ENCODE measurements at regions of chr14 and their contacts with region 1.

Region 1: GRCh38 chr14:41993687-41994086 is 387.0 kb downstream of the LRFN5 start:
- DNase-seq: no peak
- H3K4me3 ChIP-seq: no peak overlapping the region
- CTCF ChIP-seq: no peak
- POLR2A ChIP-seq: no peak

Region 2: DNA sequence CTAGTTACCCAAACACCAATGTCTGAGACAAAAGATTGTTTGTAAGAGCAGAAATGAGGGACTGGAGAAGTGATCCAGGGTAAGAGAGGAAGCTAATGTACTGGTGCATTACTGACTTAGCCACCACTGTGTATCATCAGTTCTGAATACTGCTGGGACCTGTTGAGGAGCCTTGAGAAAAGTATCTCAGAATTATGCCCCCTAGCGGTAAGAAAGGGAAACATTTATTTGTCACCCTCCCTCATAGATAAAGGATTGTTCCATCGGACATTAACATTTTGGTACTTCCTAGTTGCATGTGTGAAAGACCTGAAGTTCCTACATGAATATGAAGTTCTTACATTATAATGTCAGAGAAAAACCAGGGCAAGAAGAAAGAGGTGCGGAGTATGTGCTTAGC is 1900.8 kb after region 1 on chr14:
- intact Hi-C with region 1: loop called (anchors 10 kb)
- DNase-seq: no peak
- H3K4me3 ChIP-seq: no peak overlapping the region
- CTCF ChIP-seq: no peak
- POLR2A ChIP-seq: no peak